Dendritic cell treated with granulocyte-macrophage colony-stimulating factor and Interleukin-4, amounts not matched to agents 40 ng/mL and 50 ng/mL, for 4 days (primary cell): ENCODE measurements at regions of chr16 and their contacts with region 1.

Region 1: DNA sequence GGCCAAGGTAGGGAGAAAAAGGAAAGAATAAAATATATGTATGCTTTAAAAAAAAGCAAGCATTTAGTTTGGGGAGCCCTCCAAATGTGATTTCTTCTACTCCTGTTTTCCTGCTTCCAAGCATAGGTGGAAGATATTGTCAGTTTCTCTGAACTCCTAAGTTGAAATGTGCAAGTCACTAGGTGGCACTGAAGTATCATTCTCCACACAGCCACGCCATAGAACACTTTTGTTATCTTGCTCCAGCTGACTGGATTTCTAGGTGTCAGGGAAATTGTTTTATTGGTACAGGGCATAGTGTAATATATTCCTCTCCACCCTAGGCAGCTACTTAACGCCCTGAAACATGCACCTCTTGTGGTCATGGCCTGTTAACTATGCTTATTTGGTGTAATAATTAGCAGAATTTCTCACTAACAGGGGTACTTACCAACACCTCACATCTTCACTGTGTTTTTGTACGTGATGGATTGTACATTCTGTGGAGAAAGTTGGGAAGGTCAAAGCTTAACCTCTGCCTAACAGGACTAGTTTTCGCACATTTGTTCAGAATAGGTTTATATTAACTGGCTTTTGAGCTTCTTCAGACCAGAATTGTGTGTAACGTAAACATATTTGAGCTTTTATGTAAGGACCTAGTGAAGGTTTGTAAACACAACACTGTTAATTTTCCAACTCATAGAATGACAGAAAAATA is 69.3 kb downstream of the FTO start:
- H3K4me3 Mint-ChIP-seq: no peak overlapping the region
- H3K27ac Mint-ChIP-seq: no peak overlapping the region
- H3K4me1 Mint-ChIP-seq: peaks cover 32% of the 10 kb centered on the region
- H3K27me3 Mint-ChIP-seq: no peaks in the 10 kb centered on the region

Region 2: DNA sequence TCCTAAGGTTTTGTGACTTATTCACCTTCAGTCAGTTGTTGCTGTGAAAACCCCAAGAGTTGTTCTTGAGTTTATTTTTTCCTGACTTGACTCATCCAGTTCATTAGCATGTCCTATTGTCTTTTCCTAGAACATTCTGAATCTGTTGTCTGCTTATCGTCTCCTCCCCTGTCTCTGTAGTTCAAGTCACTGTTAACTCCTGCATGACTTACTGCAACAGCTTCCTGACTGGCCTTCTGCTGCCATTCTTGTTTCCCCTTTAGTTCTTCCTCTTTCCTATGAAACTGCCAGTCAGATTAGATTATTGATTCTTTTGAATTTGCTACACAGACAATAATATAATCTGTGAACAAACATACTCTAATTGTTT is 92.2 kb after region 1 on chr16:
- intact Hi-C with region 1: loop called (anchors 10 kb)
- H3K4me3 Mint-ChIP-seq: peak overlapping the region; percentile 55
- H3K27ac Mint-ChIP-seq: peak overlapping the region; percentile 85
- H3K4me1 Mint-ChIP-seq: peaks cover 43% of the 10 kb centered on the region
- H3K27me3 Mint-ChIP-seq: no peaks in the 10 kb centered on the region

Region 3: DNA sequence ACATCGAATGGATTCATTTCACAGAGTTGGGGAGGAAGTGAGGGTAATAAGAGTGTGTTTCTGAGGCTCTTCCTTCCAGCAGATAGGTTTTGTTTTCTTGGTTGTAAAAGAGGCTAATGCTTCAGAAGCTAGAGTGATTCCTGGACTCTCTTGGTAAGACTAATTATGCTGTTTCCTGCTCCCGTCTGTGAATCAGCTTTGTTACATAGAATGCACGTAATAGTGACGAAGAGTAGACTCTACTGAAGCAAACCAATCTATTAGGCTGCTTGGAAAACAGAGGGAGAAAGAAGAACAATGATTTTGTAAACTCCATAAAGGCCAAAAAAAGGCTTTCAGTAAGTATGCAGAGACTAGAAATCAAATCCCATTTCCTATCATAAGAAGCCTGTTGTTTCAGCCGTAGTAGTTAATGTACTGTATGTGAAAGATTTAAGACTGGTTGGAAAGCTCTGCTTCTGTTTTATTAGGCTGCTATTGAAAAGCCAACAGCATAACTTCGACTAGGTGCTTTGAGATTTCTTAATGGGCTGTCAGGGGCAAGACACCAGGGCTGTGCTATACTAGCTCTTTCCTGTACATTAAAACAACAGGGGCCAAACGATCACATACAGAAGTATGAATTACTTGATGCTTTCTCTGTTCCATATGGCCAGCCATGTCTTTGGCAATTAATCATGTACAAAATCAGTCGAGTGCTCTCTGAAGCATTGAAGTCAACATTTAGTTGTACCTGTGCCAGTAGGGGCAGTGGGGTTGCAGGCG is 149.7 kb after region 1 on chr16:
- intact Hi-C with region 1: loop called (anchors 10 kb)
- H3K4me3 Mint-ChIP-seq: no peak overlapping the region
- H3K27ac Mint-ChIP-seq: no peak overlapping the region
- H3K4me1 Mint-ChIP-seq: no peaks in the 10 kb centered on the region
- H3K27me3 Mint-ChIP-seq: no peaks in the 10 kb centered on the region

Region 4: GRCh38 chr16:54286090-54286993 is 513.0 kb after region 1 on chr16 and contains the start of gene IRX3:
- intact Hi-C with region 1: loop called (anchors 5 kb)
- H3K4me3 Mint-ChIP-seq: peak within 1 kb of the TSS; percentile 62
- H3K27ac Mint-ChIP-seq: no peak within 1 kb of the TSS
- H3K4me1 Mint-ChIP-seq: peaks cover 43% of the 10 kb centered on the region
- H3K27me3 Mint-ChIP-seq: peaks cover 88% of the 10 kb centered on the region

Region 5: GRCh38 chr16:54929090-54930004 is 1156.0 kb after region 1 on chr16:
- intact Hi-C with region 1: loop called (anchors 5 kb)
- H3K4me3 Mint-ChIP-seq: peak overlapping the region; percentile 79
- H3K27ac Mint-ChIP-seq: peak overlapping the region; percentile 83
- H3K4me1 Mint-ChIP-seq: peaks cover 41% of the 10 kb centered on the region
- H3K27me3 Mint-ChIP-seq: peaks cover 72% of the 10 kb centered on the region

Region 6: GRCh38 chr16:55257966-55258613 is 1484.8 kb after region 1 on chr16:
- intact Hi-C with region 1: loop called (anchors 2 kb)
- H3K4me3 Mint-ChIP-seq: no peak overlapping the region
- H3K27ac Mint-ChIP-seq: no peak overlapping the region
- H3K4me1 Mint-ChIP-seq: no peaks in the 10 kb centered on the region
- H3K27me3 Mint-ChIP-seq: peaks cover 12% of the 10 kb centered on the region